OCI-LY7 (cell line): ENCODE measurements at regions of chr5 and their contacts with region 1.

Region 1: DNA sequence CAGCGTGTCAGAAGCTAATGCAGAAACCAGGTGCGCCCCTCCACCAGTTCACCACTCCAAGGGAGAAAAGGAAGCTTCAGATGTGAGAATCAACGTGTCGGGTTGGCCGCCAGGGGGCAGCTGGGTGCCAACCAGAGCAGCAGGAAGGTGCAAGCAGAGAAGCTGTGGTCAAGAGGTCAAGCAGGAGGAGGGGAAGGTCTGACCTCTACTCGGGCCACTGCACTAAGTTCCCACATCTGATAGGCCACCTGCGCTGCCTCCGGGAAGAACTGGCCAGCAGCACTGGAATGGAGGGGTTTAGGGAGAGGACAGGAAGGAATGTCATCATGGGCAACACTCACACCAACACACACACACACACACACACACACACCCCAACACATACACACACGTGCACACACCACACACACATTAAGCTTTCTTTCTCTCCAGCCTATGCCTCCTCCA is 31.4 kb downstream of the ANXA6 start:
- DNase-seq: peak; percentile 83
- H3K4me3 ChIP-seq: no peak overlapping the region
- H3K27ac ChIP-seq: peak overlapping the region; percentile 86
- H3K4me1 ChIP-seq: peaks cover 91% of the 10 kb centered on the region
- CTCF ChIP-seq: peak; percentile 94

Region 2: GRCh38 chr5:151080623-151081430 is 45.4 kb before region 1 on chr5 and contains the start of gene TNIP1:
- CTCF ChIA-PET with region 1: interaction called, 3 read pairs
- POLR2A ChIA-PET with region 1: interaction called, 7 read pairs
- intact Hi-C with region 1: loop called (anchors 2 kb)
- DNase-seq: peak; percentile 94
- H3K4me3 ChIP-seq: peak within 1 kb of the TSS; percentile 88
- H3K27ac ChIP-seq: peak within 1 kb of the TSS; percentile 75
- H3K4me1 ChIP-seq: peaks cover 58% of the 10 kb centered on the region
- CTCF ChIP-seq: 0 out of 2 replicates have a peak, but pooled peaks have one; percentile 25
- total RNA-seq, gene TNIP1: 51.4 and 55.9 TPM in 2 replicates

Region 3: DNA sequence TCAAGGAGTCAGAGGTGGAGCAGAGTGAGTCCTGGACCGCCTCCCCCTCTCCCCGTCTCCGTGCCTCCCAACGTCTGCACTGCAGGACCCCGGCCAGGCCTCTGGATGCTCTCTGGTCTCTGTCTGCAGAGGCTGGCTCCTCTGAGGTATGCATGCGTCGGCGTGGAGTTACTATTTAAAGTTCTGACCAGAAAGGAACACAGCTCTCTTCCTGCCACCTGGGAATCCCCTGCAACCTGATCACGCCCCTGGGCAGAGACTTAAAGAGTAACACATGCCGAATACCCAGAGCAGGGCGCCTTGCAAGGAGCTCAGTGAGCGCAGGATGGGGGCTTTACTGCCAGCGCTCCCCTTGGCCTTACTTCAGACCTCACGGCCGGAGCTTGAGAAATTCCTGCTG is 15.3 kb after region 1 on chr5:
- CTCF ChIA-PET with region 1: interaction called, 14 read pairs
- POLR2A ChIA-PET with region 1: interaction called, 83 read pairs
- intact Hi-C with region 1: no loop called
- DNase-seq: peak; percentile 84
- H3K4me3 ChIP-seq: peak overlapping the region; percentile 60
- H3K27ac ChIP-seq: peak overlapping the region; percentile 57
- H3K4me1 ChIP-seq: peaks cover 93% of the 10 kb centered on the region
- CTCF ChIP-seq: no peak

Region 4: GRCh38 chr5:151213800-151214613 is 87.8 kb after region 1 on chr5:
- CTCF ChIA-PET with region 1: interaction called, 4 read pairs
- POLR2A ChIA-PET with region 1: interaction called, 5 read pairs
- intact Hi-C with region 1: loop called (anchors 5 kb)
- DNase-seq: peak; percentile 97
- H3K4me3 ChIP-seq: peak overlapping the region; percentile 67
- H3K27ac ChIP-seq: peak overlapping the region; percentile 98
- H3K4me1 ChIP-seq: peaks cover 97% of the 10 kb centered on the region
- CTCF ChIP-seq: no peak

Region 5: GRCh38 chr5:151315998-151316597 is 189.9 kb after region 1 on chr5:
- CTCF ChIA-PET with region 1: no interaction called
- POLR2A ChIA-PET with region 1: no interaction called
- intact Hi-C with region 1: loop called (anchors 2 kb)
- DNase-seq: peak; percentile 72
- H3K4me3 ChIP-seq: no peak overlapping the region
- H3K27ac ChIP-seq: no peak overlapping the region
- H3K4me1 ChIP-seq: peaks cover 6% of the 10 kb centered on the region
- CTCF ChIP-seq: peak; percentile 98

Region 6: DNA sequence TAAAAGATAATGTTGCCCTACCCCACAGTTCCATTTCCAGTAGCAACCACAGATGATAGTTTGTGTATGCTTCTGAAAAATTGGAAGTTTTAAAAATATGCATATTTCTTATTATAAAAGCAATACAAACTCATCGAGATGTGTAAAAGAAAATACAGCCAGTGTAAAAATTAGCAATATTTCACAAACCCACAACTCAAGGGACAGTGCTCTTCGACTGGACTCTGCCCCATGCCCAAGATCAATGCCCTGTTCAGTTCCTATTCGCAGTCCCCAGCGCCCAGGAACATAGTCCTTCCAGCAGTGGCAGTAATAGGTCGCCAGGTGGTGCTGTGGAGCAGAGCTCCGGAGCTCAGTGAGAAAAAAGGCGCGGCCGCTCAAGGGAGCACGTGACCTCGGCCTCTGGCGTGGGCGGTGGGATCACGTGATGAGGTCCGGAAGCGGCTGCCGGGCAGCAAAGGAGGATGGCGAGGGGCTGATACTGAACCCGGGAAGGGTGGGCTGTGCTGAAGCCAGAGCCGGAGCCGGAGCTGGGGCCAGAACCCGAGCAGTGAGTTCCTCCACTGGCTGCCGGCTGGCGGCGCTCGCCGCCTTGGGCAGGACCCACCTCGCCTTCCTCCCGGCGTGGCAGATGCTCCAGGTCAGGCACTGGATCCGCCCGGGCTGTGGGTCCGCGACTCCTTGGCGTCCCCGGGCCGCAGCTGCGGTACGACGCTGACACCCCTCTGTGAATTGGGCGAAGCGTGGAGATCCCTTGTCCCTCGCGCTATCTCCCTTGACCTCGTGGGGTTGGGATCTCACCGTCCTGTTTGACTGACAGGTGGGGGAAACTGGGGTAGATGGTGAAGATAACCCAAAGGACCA is 321.2 kb after region 1 on chr5 and contains the start of gene SLC36A1:
- CTCF ChIA-PET with region 1: no interaction called
- POLR2A ChIA-PET with region 1: no interaction called
- intact Hi-C with region 1: no loop called
- DNase-seq: peak; percentile 96
- H3K4me3 ChIP-seq: peak within 1 kb of the TSS; percentile 86
- H3K27ac ChIP-seq: no peak within 1 kb of the TSS
- H3K4me1 ChIP-seq: peaks cover 7% of the 10 kb centered on the region
- CTCF ChIP-seq: peak; percentile 94
- total RNA-seq, gene SLC36A1: 6.7 and 11.6 TPM in 2 replicates